Upper lobe of right lung (tissue), 1 donor: ENCODE measurements at regions of chr2 and their contacts with region 1.

Region 1: DNA sequence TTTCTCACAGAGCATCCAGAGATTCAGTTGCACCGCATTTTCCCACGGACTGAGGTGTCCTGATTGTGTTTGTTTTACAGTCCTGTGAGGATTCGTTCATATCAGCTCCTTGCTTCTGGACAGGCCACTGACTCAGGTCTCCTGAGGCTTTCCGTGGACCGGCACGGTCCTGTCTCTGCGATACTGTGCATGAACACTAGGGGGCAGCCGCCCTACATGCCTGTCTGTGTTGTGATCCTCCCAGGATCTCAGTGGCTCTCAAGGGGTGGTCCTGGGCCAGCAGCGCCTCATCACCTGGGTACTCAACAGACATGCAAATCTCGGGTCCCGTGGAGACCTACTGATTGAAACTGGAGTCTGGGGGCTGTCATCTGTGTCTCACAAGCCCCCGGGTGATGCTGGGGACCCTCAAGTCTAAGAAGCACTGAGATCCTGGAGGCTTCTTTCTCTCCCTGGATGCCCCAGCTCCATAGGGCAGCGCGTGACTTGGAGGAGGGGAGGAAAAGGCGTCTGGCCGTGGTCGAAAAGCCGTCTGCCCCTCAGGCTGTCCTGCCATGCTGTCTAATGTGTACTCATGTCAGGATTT is 28.9 kb downstream of the IL1R2 start:
- DNase-seq: peak; percentile 89
- ATAC-seq: peak; percentile 99
- H3K4me3 ChIP-seq: no peak overlapping the region
- H3K27ac ChIP-seq: no peak overlapping the region
- H3K4me1 ChIP-seq: peaks cover 22% of the 10 kb centered on the region
- H3K27me3 ChIP-seq: no peaks in the 10 kb centered on the region
- CTCF ChIP-seq: peak; percentile 99

Region 2: DNA sequence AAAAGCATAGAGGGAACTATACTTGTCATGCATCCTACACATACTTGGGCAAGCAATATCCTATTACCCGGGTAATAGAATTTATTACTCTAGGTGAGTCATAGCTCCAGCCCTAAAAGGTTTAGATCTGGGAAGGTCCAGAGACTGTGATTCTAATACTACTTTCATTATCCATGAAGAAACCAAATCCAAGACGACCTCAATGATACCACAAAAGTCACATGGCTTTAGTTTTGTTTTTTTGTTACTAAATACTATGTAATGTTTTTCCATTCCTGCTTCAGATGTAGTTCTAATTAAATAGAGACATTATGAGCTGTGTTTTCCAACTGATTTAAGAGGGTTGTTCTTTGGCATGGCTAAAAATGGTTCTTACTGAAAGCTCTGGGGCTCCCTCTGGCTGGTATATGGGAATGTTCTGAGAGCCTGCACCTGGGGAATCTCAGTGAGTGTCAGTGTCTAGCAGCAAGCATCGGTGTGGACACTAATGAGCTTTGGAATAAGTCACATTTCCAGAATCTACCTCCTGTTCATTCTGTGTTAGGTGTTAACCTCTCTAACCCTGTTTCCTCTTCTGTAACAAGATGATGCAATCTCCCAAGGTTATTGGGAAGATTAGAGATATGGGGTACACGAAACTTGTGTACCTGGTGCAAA is 145.6 kb after region 1 on chr2:
- intact Hi-C with region 1: loop called (anchors 5 kb)
- DNase-seq: no peak
- ATAC-seq: peak; percentile 80
- H3K4me3 ChIP-seq: no peak overlapping the region
- H3K27ac ChIP-seq: peak overlapping the region; percentile 14
- H3K4me1 ChIP-seq: peaks cover 22% of the 10 kb centered on the region
- H3K27me3 ChIP-seq: no peaks in the 10 kb centered on the region
- CTCF ChIP-seq: peak; percentile 55

Region 3: GRCh38 chr2:102235491-102235890 is 214.8 kb after region 1 on chr2:
- intact Hi-C with region 1: loop called (anchors 10 kb)
- DNase-seq: no peak
- ATAC-seq: peak; percentile 69
- H3K4me3 ChIP-seq: no peak overlapping the region
- H3K27ac ChIP-seq: no peak overlapping the region
- H3K4me1 ChIP-seq: no peaks in the 10 kb centered on the region
- H3K27me3 ChIP-seq: no peaks in the 10 kb centered on the region
- CTCF ChIP-seq: peak; percentile 39

Region 4: GRCh38 chr2:102442967-102443828 is 422.5 kb after region 1 on chr2:
- intact Hi-C with region 1: loop called (anchors 10 kb)
- DNase-seq: no peak
- ATAC-seq: peak; percentile 73
- H3K4me3 ChIP-seq: no peak overlapping the region
- H3K27ac ChIP-seq: no peak overlapping the region
- H3K4me1 ChIP-seq: no peaks in the 10 kb centered on the region
- H3K27me3 ChIP-seq: no peaks in the 10 kb centered on the region
- CTCF ChIP-seq: peak; percentile 76